ENCODE measurements at regions of chr6 and their contacts with region 1.

Region 1: DNA sequence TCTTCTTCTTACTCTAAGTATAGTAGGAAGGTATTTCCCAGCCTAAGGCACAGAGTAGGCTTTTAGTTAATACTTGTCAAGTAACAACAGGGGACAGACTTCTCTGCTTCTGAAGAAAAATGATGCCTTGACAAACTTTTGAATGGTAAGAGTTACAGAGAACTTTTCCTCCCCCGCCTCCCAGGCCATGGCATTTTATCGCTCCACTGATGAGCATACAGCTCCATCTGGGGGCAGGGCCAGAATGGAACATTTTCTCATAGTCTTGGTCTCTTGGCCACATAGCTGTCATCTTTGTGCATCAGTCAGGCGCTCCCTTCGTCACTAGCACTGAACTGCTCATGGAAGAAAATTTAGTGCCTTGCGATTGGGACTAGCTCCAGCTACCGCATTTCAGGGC is 1066.8 kb upstream of the CITED2 start:
- DNase-seq: peak; percentile 68
- ATAC-seq: peak; percentile 92

Region 2: DNA sequence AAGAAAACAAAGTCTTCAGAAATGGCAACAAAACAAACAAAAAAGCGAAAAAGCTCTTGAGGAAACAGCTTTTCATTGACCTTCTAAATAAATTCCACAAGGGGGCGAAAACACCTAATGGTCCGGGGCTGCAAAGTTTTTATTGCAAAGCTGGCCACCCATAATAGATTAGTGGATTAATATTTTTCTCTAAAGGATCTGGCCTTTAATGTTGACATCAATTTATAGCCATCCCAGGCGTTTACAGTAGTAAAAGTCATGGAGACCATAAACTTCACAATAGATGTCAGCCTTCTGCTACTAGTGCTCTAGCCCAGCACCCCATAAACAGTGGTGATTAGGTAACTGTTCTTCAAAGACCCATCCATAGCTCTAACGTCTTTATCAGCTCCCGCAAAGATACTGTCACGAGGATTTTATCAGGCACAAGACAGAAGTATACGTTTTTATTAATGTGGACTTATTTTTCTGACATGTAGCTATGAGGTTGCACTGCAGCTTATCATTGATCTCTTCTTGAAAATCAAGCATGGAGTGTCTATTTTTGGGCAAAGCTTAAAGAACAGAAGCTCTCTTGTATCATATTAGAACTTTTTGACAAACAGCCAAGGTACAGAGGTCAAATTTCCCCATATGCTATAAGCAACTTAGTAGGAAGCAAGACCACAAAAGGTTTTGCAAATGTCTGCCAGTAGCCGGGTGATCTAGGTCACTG is 1071.5 kb before region 1 on chr6:
- intact Hi-C with region 1: loop called (anchors 5 kb)
- DNase-seq: no peak
- ATAC-seq: peak; percentile 6

Region 3: DNA sequence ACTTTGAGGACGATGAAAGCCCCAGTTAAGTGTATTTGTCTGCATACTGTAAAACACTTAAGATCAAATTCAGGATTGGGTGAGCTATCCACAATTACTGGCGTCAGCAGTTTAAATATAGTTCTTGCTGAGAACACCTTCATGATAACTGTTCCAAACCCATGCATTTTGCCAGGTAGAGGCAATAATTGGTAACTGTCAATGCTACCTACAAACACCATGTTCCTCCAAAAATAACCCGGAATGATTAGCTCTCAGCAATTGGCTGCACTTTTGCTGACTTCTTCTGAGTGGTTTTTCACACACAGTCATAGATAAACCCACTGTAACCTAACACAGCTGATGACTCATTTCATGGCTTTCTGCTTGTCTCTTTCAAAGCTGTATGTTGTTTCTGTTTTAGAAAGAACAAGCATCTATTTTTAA is 332.8 kb after region 1 on chr6:
- intact Hi-C with region 1: loop called (anchors 10 kb)
- DNase-seq: no peak
- ATAC-seq: peak; percentile 97